Spleen (tissue), 13 donors: ENCODE measurements at regions of chr1 and their contacts with region 1.

Region 1: GRCh38 chr1:109790735-109791494 is 27.2 kb upstream of the EPS8L3 start:
- DNase-seq: peak; percentile 94
- H3K4me3 ChIP-seq: peak overlapping the region in 1 of 8 donors; percentile 11
- H3K27ac ChIP-seq: peak overlapping the region; percentile 55 to 87 (median 77)
- H3K4me1 ChIP-seq: peaks cover 41 to 89% (median 71%) of the 10 kb centered on the region in 6 donors
- H3K27me3 ChIP-seq: peaks cover 0 to 6% (median 0%) of the 10 kb centered on the region in 7 donors
- CTCF ChIP-seq: peak; percentile 51 to 82 (median 71)
- POLR2A ChIP-seq: no peak

Region 2: DNA sequence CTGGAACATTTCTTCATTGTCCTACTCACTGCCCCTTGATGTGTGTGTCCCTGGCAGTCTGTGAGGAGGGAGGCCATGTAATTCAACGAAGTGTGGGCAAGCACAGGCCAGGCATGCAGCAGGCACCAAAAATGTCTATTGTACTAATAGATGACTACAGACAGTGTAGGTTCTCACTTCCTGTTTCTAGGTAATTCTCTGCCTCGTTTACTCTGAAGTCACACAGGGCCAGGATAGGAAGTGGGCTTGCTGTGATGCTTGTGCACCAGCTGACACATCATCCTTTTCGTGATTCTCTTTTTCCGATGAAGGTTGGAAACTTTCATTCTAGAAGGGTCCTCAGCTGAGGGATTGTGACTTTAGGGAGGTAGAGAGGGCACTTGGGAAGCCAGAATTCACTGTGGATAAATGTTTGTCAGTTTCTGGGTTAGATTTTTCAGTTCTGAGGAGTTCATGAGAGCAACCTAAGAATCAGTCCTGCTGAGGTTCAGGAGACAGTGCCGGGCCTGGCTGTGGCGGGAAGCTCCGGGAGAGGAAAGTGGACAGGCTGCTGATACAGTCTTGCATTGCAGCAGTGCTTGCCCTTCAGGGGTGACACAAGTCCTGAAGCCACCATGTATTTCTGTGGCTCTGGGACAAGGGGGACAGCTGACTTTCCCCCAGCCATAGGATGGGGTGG is 115.4 kb after region 1 on chr1:
- intact Hi-C with region 1: loop called (anchors 10 kb)
- DNase-seq: no peak
- H3K4me3 ChIP-seq: no peak overlapping the region
- H3K27ac ChIP-seq: peak overlapping the region; percentile 36 to 87 (median 71)
- H3K4me1 ChIP-seq: peaks cover 27 to 75% (median 52%) of the 10 kb centered on the region in 6 donors
- H3K27me3 ChIP-seq: peaks cover 0 to 25% (median 0%) of the 10 kb centered on the region in 7 donors
- CTCF ChIP-seq: no peak
- POLR2A ChIP-seq: no peak

Region 3: DNA sequence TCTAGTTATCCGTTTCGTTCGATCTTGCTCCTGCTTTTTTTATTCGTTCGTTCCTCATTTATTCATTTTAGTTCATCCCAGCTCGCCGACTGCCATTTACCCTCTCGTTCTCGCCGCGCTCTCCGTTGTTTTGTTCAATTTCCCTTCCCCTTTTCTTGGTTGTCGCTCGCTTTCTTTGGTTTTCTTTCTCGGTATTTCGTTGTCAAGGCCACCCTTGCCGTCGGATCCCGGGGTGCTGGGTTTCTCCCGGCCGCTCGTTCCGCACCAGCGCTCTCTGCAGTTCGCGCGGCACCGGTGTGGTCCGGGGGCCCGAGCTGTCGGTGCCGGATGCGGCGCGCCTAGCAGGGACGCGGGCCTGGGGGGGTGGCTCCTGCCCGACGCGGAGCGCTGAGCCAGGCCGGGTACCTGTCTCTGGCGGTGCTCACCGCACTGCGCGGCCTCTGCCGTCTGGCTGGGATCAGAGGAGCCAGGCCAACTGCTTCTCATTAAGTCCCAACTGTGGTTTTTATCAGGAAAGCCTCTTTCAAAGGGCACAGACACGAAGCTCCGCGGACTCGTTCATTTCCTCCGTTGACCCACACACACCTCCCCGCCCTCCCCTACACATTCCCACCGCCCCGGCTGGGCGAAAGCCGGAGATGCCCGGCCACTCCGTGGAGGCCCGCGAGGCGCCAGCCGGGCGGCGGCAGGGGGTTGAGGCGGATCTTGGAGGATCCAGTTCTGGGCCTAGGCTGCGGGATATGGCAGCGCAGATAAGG is 277.9 kb after region 1 on chr1:
- intact Hi-C with region 1: no loop called
- DNase-seq: peak; percentile 76
- H3K4me3 ChIP-seq: peak overlapping the region in 7 of 8 donors; percentile 8 to 59 (median 24)
- H3K27ac ChIP-seq: no peak overlapping the region
- H3K4me1 ChIP-seq: peaks cover 23 to 45% (median 32%) of the 10 kb centered on the region in 6 donors
- H3K27me3 ChIP-seq: peaks cover 20 to 88% (median 63%) of the 10 kb centered on the region in 7 donors
- CTCF ChIP-seq: no peak
- POLR2A ChIP-seq: no peak